Activated naive CD4-positive, alpha-beta T cell treated with anti-CD3 and anti-CD28 coated beads for 36 hours (primary cell): ENCODE measurements at regions of chr3 and their contacts with region 1.

Region 1: DNA sequence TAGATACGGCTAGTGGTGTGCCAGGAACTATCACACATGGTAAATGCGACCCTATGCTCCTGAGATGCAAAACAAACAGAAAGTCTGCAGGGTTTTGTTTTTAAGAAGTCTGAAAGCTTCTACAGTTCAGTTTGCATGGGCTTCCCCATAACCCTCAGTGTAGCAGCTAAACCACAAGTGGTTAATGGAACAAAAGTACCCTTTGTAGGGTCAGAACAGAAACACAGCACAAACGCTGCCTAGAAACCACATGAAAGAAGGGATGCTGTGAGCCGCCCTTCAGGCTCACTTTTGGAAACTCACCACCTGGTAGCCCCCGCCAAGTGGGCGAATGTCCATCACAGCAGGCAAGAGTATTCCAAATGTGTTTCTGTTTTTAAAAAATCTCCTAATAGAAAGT is 46.2 kb downstream of the CTDSPL start:
- DNase-seq: no peak
- H3K4me3 Mint-ChIP-seq: no peak overlapping the region
- H3K27ac Mint-ChIP-seq: peak overlapping the region; percentile 14
- H3K4me1 Mint-ChIP-seq: peaks cover 21% of the 10 kb centered on the region
- H3K27me3 Mint-ChIP-seq: no peaks in the 10 kb centered on the region

Region 2: DNA sequence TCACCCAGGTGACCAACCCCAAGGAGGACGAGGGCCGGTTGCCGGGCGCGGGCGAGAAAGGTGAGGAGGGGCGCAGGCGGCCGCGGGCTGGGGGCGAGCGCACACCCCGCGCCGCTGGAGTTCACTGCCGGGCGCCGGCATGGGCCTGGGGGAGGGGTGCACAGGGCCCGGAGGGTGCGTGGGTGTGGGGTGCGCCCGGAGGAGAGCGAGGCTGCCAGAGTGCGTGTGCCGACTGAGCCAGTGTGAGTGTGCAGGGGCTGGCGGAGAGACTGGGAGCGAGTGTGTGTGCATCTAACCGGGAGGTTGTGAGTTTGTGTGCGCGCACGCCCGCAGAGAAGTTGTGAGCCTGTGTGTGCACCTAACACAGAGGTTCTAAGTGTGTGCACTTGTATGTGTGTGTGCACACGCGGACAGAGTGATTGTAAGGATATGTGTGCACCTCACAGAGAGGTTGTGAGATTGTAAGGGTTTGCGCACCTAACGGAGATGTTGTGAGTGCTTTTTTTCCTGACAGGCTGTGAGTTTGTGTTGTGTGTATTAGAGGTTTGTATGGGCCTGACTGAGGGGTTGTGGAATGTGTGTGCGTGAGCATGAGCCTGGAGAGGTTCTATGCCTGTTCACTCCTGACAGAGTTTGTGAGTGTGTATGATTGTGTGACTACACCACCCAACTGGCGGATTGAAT is 45.5 kb before region 1 on chr3:
- CTCF ChIA-PET with region 1: no interaction called
- intact Hi-C with region 1: loop called (anchors 2 kb)
- DNase-seq: peak; percentile 54
- H3K4me3 Mint-ChIP-seq: peak overlapping the region; percentile 73
- H3K27ac Mint-ChIP-seq: no peak overlapping the region
- H3K4me1 Mint-ChIP-seq: peaks cover 18% of the 10 kb centered on the region
- H3K27me3 Mint-ChIP-seq: peaks cover 2% of the 10 kb centered on the region

Region 3: GRCh38 chr3:38823722-38824121 is 915.8 kb after region 1 on chr3:
- CTCF ChIA-PET with region 1: no interaction called
- intact Hi-C with region 1: no loop called
- DNase-seq: no peak
- H3K4me3 Mint-ChIP-seq: no peak overlapping the region
- H3K27ac Mint-ChIP-seq: no peak overlapping the region
- H3K4me1 Mint-ChIP-seq: no peaks in the 10 kb centered on the region
- H3K27me3 Mint-ChIP-seq: peaks cover 5% of the 10 kb centered on the region